ENCODE measurements at regions of chr10 and their contacts with region 1.

Region 1: GRCh38 chr10:96513698-96514561 is at the start of gene TLL2:
- DNase-seq: peak; percentile 87 to 89
- ATAC-seq: peak; percentile 91
- total RNA-seq, gene TLL2: 0.34 to 0.37 TPM

Region 2: GRCh38 chr10:96395931-96396877 is 117.7 kb before region 1 on chr10:
- intact Hi-C with region 1: loop called (anchors 5 to 10 kb)
- DNase-seq: peak; percentile 54 to 73
- ATAC-seq: peak; percentile 94